Aorta (tissue), 5 donors: ENCODE measurements at regions of chr2 and their contacts with region 1.

Region 1: DNA sequence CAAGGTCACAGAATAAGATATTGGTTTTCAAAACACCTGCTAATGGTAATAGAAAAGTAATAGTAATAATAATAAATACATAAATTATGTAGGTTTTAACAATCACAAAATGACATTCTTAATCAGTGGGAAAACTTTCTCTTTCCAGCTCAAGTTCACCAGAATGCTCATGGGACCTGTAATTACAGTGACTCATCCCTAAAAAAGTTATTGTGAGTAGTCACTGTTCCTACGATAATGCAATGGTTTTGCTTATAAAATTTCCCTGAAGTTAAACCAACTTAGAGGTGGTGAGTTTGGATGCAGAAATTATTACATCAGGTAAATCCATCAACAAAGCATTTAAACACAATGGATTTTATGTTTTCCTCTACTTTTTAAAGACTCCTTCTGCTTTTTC is 502.3 kb downstream of the PID1 start:
- DNase-seq: no peak
- ATAC-seq: peak; percentile 68
- H3K4me3 ChIP-seq: no peak overlapping the region
- H3K27ac ChIP-seq: no peak overlapping the region
- H3K4me1 ChIP-seq: peaks cover 0 to 10% of the 10 kb centered on the region in 2 donors
- H3K27me3 ChIP-seq: no peaks in the 10 kb centered on the region

Region 2: GRCh38 chr2:228083131-228083530 is 685.7 kb before region 1 on chr2:
- intact Hi-C with region 1: no loop called
- DNase-seq: no peak
- ATAC-seq: no peak
- H3K4me3 ChIP-seq: no peak overlapping the region
- H3K27ac ChIP-seq: no peak overlapping the region
- H3K4me1 ChIP-seq: no peaks in the 10 kb centered on the region
- H3K27me3 ChIP-seq: no peaks in the 10 kb centered on the region

Region 3: GRCh38 chr2:228731517-228731916 is 37.3 kb before region 1 on chr2:
- intact Hi-C with region 1: loop called in 1 of 2 experiments (anchors 5 kb)
- DNase-seq: peak in 1 of 2 donors; percentile 50
- ATAC-seq: no peak
- H3K4me3 ChIP-seq: no peak overlapping the region
- H3K27ac ChIP-seq: no peak overlapping the region
- H3K4me1 ChIP-seq: no peaks in the 10 kb centered on the region
- H3K27me3 ChIP-seq: no peaks in the 10 kb centered on the region

Region 4: GRCh38 chr2:228747483-228747882 is 21.3 kb before region 1 on chr2:
- intact Hi-C with region 1: no loop called
- DNase-seq: no peak
- ATAC-seq: no peak
- H3K4me3 ChIP-seq: no peak overlapping the region
- H3K27ac ChIP-seq: no peak overlapping the region
- H3K4me1 ChIP-seq: no peaks in the 10 kb centered on the region
- H3K27me3 ChIP-seq: no peaks in the 10 kb centered on the region

Region 5: DNA sequence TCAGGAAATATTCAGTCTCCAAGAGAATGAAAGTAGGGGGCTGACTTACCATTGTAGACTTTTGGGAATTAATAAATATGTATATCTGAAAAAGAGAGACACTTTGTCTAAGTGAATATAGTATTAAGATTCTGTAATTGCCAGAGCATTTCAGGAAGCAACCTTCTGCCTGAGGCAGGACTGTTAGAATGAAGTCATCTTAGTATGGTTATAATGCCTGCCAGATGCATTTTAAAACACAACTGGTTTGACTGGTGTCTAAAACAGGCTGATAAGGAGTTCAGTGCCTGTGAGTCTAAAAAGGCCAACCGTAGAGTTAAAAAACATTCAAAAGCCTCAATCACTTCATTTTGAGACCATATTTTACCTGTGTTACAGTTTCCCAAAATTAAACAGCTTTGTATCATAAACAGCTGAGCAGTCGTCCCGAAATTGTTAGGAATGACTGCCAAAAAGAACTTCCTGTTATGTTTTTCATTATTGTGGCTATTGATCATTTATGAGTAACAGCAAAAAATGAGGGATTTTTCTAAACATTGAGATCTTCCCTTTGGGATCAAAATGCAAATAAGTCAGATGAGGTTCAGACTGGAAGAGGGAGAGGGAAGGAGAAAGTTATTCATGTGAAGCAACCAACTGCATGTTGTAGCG is 58.4 kb after region 1 on chr2:
- intact Hi-C with region 1: no loop called
- DNase-seq: no peak
- ATAC-seq: no peak
- H3K4me3 ChIP-seq: no peak overlapping the region
- H3K27ac ChIP-seq: no peak overlapping the region
- H3K4me1 ChIP-seq: no peaks in the 10 kb centered on the region
- H3K27me3 ChIP-seq: no peaks in the 10 kb centered on the region